Naive thymus-derived CD4-positive, alpha-beta T cell (primary cell): ENCODE measurements at regions of chr1 and their contacts with region 1.

Region 1: GRCh38 chr1:165630629-165631341 is at the start of gene MGST3:
- DNase-seq: peak; percentile 91 to 96 (median 93)
- ATAC-seq: peak; percentile 98
- H3K4me3 ChIP-seq: peak within 1 kb of the TSS; percentile 91
- H3K4me3 Mint-ChIP-seq: no peak within 1 kb of the TSS
- H3K27ac ChIP-seq: peak within 1 kb of the TSS; percentile 78
- H3K27ac Mint-ChIP-seq: peak within 1 kb of the TSS in 1 of 9 donors; percentile 89
- H3K4me1 ChIP-seq: peaks cover 16 to 18% of the 10 kb centered on the region in 2 donors
- H3K4me1 Mint-ChIP-seq: peaks cover 5 to 27% (median 20%) of the 10 kb centered on the region in 7 donors
- H3K27me3 ChIP-seq: no peaks in the 10 kb centered on the region
- H3K27me3 Mint-ChIP-seq: peaks cover 0 to 16% (median 0%) of the 10 kb centered on the region in 5 donors
- total RNA-seq, gene MGST3: 21.4 to 59.4 (median 48.3) TPM

Region 2: DNA sequence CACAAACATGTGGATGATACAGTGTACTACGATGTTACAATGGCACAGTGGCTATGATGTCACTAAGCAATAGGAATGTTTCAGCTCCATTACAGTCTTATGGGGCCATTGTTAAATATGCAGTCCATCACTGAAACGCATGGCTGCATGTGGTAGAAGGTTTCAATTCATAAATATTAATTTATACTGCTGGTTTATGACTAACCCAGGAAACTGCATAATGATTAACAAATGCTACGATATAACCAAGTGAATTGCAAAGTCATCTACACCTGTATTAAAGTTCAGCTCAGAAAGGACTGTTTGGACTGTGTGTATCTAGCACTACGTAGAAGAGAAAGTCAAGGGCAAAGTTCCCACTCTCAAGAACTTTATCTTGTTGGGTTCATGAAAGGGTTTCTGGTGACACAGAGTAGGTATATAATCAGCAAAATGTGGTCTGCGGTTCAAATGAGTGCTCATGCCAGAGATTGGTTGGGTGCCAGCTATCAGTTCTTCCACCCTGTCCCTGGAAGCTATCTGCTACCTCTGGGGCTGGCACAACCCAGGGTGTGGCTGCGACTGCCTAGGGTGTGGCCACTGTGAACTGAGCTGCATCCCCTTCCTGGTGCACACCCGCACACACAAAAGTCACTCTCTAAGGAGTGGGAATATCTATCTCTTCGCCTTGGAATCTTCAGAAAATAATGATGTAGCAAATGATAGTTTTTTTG is 15.0 kb after region 1 on chr1:
- CTCF ChIA-PET with region 1: no interaction called
- POLR2A ChIA-PET with region 1: no interaction called
- intact Hi-C with region 1: no loop called
- DNase-seq: no peak
- ATAC-seq: peak; percentile 61
- H3K4me3 ChIP-seq: no peak overlapping the region
- H3K4me3 Mint-ChIP-seq: peak overlapping the region in 1 of 10 donors; percentile 34
- H3K27ac ChIP-seq: no peak overlapping the region
- H3K27ac Mint-ChIP-seq: peak overlapping the region in 2 of 9 donors; percentile 15 to 36
- H3K4me1 ChIP-seq: peaks cover 7 to 8% of the 10 kb centered on the region in 2 donors
- H3K4me1 Mint-ChIP-seq: peaks cover 11 to 42% (median 25%) of the 10 kb centered on the region in 7 donors
- H3K27me3 ChIP-seq: no peaks in the 10 kb centered on the region
- H3K27me3 Mint-ChIP-seq: no peaks in the 10 kb centered on the region

Region 3: GRCh38 chr1:165679282-165680036 is 48.7 kb after region 1 on chr1:
- CTCF ChIA-PET with region 1: no interaction called
- POLR2A ChIA-PET with region 1: interaction called, 4 read pairs
- intact Hi-C with region 1: loop called in 1 of 2 experiments (anchors 5 kb)
- DNase-seq: no peak
- ATAC-seq: no peak
- H3K4me3 ChIP-seq: no peak overlapping the region
- H3K4me3 Mint-ChIP-seq: no peak overlapping the region
- H3K27ac ChIP-seq: no peak overlapping the region
- H3K27ac Mint-ChIP-seq: peak overlapping the region in 8 of 9 donors; percentile 13 to 87 (median 76)
- H3K4me1 ChIP-seq: peaks cover 0 to 8% of the 10 kb centered on the region in 2 donors
- H3K4me1 Mint-ChIP-seq: peaks cover 13 to 43% (median 39%) of the 10 kb centered on the region in 7 donors
- H3K27me3 ChIP-seq: no peaks in the 10 kb centered on the region
- H3K27me3 Mint-ChIP-seq: no peaks in the 10 kb centered on the region

Region 4: GRCh38 chr1:165768513-165769394 is 138.0 kb after region 1 on chr1 and contains the start of gene TMCO1:
- CTCF ChIA-PET with region 1: no interaction called
- POLR2A ChIA-PET with region 1: interaction called, 10 read pairs
- intact Hi-C with region 1: loop called (anchors 1 kb)
- DNase-seq: peak; percentile 76 to 97 (median 94)
- ATAC-seq: peak; percentile 98
- H3K4me3 ChIP-seq: peak within 1 kb of the TSS; percentile 94
- H3K4me3 Mint-ChIP-seq: peak within 1 kb of the TSS; percentile 90 to 100 (median 97)
- H3K27ac ChIP-seq: peak within 1 kb of the TSS; percentile 85
- H3K27ac Mint-ChIP-seq: peak within 1 kb of the TSS; percentile 91 to 100 (median 98)
- H3K4me1 ChIP-seq: peaks cover 19 to 32% of the 10 kb centered on the region in 2 donors
- H3K4me1 Mint-ChIP-seq: peaks cover 44 to 83% (median 68%) of the 10 kb centered on the region in 7 donors
- H3K27me3 ChIP-seq: no peaks in the 10 kb centered on the region
- H3K27me3 Mint-ChIP-seq: no peaks in the 10 kb centered on the region
- total RNA-seq, gene TMCO1: 30.4 to 97.1 (median 49.8) TPM

Region 5: GRCh38 chr1:165827268-165828102 is 196.7 kb after region 1 on chr1 and contains the start of gene UCK2:
- CTCF ChIA-PET with region 1: no interaction called
- POLR2A ChIA-PET with region 1: interaction called, 3 read pairs
- intact Hi-C with region 1: loop called (anchors 1 kb)
- DNase-seq: peak in 7 of 9 donors; percentile 14 to 77 (median 27)
- ATAC-seq: peak; percentile 81
- H3K4me3 ChIP-seq: peak within 1 kb of the TSS; percentile 77
- H3K4me3 Mint-ChIP-seq: peak within 1 kb of the TSS; percentile 85 to 95 (median 92)
- H3K27ac ChIP-seq: peak within 1 kb of the TSS; percentile 42
- H3K27ac Mint-ChIP-seq: peak within 1 kb of the TSS in 7 of 9 donors; percentile 2 to 85 (median 60)
- H3K4me1 ChIP-seq: peaks cover 9 to 12% of the 10 kb centered on the region in 2 donors
- H3K4me1 Mint-ChIP-seq: peaks cover 0 to 27% (median 19%) of the 10 kb centered on the region in 7 donors
- H3K27me3 ChIP-seq: no peaks in the 10 kb centered on the region
- H3K27me3 Mint-ChIP-seq: peaks cover under 1 to 23% (median 9%) of the 10 kb centered on the region in 5 donors
- total RNA-seq, gene UCK2: 0.89 to 32.7 (median 1.2) TPM

Region 6: DNA sequence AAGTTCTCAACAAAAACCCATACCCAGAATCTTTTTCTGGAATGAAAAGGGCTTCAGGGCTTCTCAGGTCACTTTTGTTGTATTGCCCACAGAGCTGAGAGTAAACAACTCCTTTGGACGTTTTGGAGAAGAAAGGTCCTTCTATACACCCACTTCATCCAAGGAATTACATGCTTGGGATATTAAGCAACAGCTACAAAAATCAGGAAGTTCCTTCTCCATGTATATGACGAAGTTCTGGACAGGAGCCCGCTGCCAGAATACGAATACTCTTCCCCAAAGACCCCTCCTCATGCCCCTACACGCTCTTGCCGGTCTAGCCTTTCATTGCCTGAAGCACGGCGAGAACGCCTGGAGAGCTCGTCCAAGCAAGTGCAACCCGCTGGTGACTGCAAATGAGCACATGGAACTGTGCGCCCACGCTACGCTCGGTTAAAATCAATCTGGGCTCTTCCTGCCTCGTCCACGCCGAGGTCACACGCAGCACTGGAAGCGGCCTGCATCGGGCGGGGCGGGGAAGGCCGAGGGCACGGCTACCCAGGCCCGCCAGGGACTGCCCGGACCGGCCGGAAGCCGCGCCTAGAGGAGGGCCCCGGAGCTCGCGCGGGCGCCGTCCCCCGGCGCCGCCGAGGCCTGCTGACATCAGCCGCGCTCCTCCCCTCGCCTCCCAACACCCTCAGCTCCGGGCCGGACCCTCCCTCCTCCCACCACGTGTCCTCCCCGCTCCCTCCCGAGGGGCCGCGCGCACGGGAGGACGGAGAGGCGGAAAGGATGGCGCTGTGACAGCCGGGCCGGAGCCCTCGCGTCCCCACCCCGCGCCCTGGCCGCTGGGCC is 1208.2 kb after region 1 on chr1 and contains the start of gene POGK:
- CTCF ChIA-PET with region 1: no interaction called
- POLR2A ChIA-PET with region 1: no interaction called
- intact Hi-C with region 1: loop called in 1 of 2 experiments (anchors 5 kb)
- DNase-seq: peak; percentile 70 to 89 (median 77)
- ATAC-seq: peak; percentile 95
- H3K4me3 ChIP-seq: peak within 1 kb of the TSS; percentile 60
- H3K4me3 Mint-ChIP-seq: peak within 1 kb of the TSS; percentile 89 to 97 (median 92)
- H3K27ac ChIP-seq: peak within 1 kb of the TSS; percentile 90
- H3K27ac Mint-ChIP-seq: peak within 1 kb of the TSS; percentile 91 to 100 (median 94)
- H3K4me1 ChIP-seq: peaks cover 13 to 21% of the 10 kb centered on the region in 2 donors
- H3K4me1 Mint-ChIP-seq: peaks cover 23 to 55% (median 48%) of the 10 kb centered on the region in 7 donors
- H3K27me3 ChIP-seq: no peaks in the 10 kb centered on the region
- H3K27me3 Mint-ChIP-seq: no peaks in the 10 kb centered on the region
- total RNA-seq, gene POGK: 24.7 to 38.7 (median 36.9) TPM